Mammary epithelial cell (primary cell): ENCODE measurements at regions of chr2 and their contacts with region 1.

Region 1: GRCh38 chr2:20065885-20066602 is 14.6 kb upstream of the LAPTM4A start:
- DNase-seq: peak; percentile 98
- H3K4me3 ChIP-seq: no peak overlapping the region
- H3K27ac ChIP-seq: peak overlapping the region; percentile 29
- H3K4me1 ChIP-seq: peaks cover 41% of the 10 kb centered on the region
- H3K27me3 ChIP-seq: no peaks in the 10 kb centered on the region
- CTCF ChIP-seq: no peak

Region 2: GRCh38 chr2:19989681-19990415 is 76.2 kb before region 1 on chr2 and contains the start of gene WDR35:
- CTCF ChIA-PET with region 1: no interaction called
- dilution Hi-C with region 1: no loop called
- in situ Hi-C with region 1: no loop called
- intact Hi-C with region 1: no loop called
- DNase-seq: peak; percentile 88
- H3K4me3 ChIP-seq: peak within 1 kb of the TSS; percentile 67 to 91 (median 75)
- H3K27ac ChIP-seq: peak within 1 kb of the TSS; percentile 45
- H3K4me1 ChIP-seq: peaks cover 9% of the 10 kb centered on the region
- H3K27me3 ChIP-seq: no peaks in the 10 kb centered on the region
- CTCF ChIP-seq: no peak
- total RNA-seq, gene WDR35: 8.8 to 11.5 TPM

Region 3: DNA sequence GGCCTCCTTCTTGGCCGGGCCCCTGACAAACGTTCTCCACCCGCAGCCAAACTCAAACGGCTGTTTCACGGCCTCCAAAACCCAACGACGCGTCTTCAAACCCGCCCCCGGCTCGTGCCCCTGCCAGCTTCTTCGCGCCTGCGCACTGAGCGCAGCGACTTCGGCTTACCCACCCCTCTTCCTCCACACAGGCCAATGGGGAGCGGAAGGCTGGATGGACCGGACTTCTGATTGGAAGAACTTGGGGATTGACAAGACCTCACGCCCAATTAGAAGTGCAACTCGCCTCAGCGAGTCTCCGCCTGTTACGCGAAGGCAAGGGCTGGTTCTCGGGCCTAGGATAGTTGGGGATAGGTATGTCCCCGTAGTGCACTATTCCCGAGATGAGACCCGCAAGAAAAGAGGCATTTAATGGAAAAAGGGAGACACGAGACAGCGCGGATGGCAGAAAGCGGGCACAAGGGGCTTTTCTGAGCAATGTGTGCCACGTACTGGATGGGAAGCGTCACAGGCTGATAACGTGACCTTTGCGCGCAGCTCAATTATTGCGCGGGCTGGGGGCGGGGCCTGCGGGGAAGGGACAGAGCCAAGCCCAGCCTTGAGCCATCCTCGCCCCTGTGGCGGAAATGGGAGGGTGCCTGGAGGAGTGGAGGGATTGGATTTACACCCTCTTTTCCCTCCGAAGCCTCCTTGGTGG is 14.4 kb before region 1 on chr2 and contains the start of gene LAPTM4A:
- CTCF ChIA-PET with region 1: interaction called, 5 read pairs
- dilution Hi-C with region 1: no loop called
- in situ Hi-C with region 1: no loop called
- intact Hi-C with region 1: loop called (anchors 1 kb)
- DNase-seq: peak; percentile 100
- H3K4me3 ChIP-seq: peak within 1 kb of the TSS; percentile 75 to 97 (median 87)
- H3K27ac ChIP-seq: peak within 1 kb of the TSS; percentile 93
- H3K4me1 ChIP-seq: peaks cover 22% of the 10 kb centered on the region
- H3K27me3 ChIP-seq: no peaks in the 10 kb centered on the region
- CTCF ChIP-seq: peak in 1 of 2 donors; percentile 3
- total RNA-seq, gene LAPTM4A: 160 to 162 TPM

Region 4: GRCh38 chr2:20081841-20082240 is 15.8 kb after region 1 on chr2:
- CTCF ChIA-PET with region 1: no interaction called
- dilution Hi-C with region 1: no loop called
- in situ Hi-C with region 1: no loop called
- intact Hi-C with region 1: loop called (anchors 2 kb)
- DNase-seq: no peak
- H3K4me3 ChIP-seq: no peak overlapping the region
- H3K27ac ChIP-seq: no peak overlapping the region
- H3K4me1 ChIP-seq: peaks cover 8% of the 10 kb centered on the region
- H3K27me3 ChIP-seq: no peaks in the 10 kb centered on the region
- CTCF ChIP-seq: no peak

Region 5: GRCh38 chr2:20091305-20091991 is 25.4 kb after region 1 on chr2:
- CTCF ChIA-PET with region 1: interaction called, 3 read pairs
- dilution Hi-C with region 1: no loop called
- in situ Hi-C with region 1: no loop called
- intact Hi-C with region 1: loop called (anchors 1 kb)
- DNase-seq: peak; percentile 87
- H3K4me3 ChIP-seq: no peak overlapping the region
- H3K27ac ChIP-seq: peak overlapping the region; percentile 70
- H3K4me1 ChIP-seq: peaks cover 48% of the 10 kb centered on the region
- H3K27me3 ChIP-seq: no peaks in the 10 kb centered on the region
- CTCF ChIP-seq: no peak

Region 6: DNA sequence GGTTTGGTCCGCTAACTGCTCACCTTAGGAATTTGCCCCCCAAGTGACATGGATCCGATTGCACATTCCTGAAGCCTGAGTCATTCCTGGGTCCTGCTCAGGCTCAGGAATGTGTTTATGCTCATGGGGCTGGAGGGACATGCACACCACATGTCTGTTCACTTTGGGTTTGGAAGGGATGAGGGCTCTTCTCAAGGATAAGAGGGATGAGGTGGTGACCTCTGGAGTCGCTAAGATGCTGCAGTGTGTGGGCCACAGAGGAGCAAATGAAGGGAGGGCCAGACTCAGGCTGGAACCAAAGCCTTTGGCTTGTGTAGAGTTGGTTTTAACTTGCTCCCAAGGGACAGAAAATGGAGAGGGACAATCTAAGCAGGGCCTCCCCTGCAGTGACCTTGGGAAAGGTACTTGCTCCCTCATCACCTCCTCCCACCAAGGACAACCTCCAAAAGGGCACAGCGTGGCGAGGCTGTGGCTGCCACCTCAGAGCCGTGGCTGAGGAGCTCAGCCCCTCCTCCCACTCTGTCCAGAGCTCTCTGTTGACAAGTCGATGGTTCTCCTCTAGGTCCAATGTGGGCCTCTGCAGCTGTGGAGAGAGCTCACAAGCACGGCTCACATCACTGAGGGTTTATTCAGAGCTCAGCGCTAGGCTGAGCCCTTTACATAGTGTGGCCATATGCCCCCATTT is 518.7 kb after region 1 on chr2:
- CTCF ChIA-PET with region 1: no interaction called
- dilution Hi-C with region 1: no loop called
- in situ Hi-C with region 1: no loop called
- intact Hi-C with region 1: loop called (anchors 5 kb)
- DNase-seq: peak; percentile 73
- H3K4me3 ChIP-seq: no peak overlapping the region
- H3K27ac ChIP-seq: no peak overlapping the region
- H3K4me1 ChIP-seq: peaks cover 25% of the 10 kb centered on the region
- H3K27me3 ChIP-seq: no peaks in the 10 kb centered on the region
- CTCF ChIP-seq: no peak